ENCODE measurements at regions of chr1 and their contacts with region 1.

Region 1: GRCh38 chr1:33460947-33461629 is 11.4 kb upstream of the ZSCAN20 start:
- DNase-seq: no peak
- H3K4me3 ChIP-seq: no peak overlapping the region
- H3K4me3 Mint-ChIP-seq: no peak overlapping the region
- H3K27ac ChIP-seq: no peak overlapping the region
- H3K27ac Mint-ChIP-seq: peak overlapping the region in 1 of 7 donors; percentile 31
- H3K4me1 ChIP-seq: no peaks in the 10 kb centered on the region
- H3K4me1 Mint-ChIP-seq: no peaks in the 10 kb centered on the region
- H3K27me3 ChIP-seq: no peaks in the 10 kb centered on the region
- H3K27me3 Mint-ChIP-seq: peaks cover 0 to 5% of the 10 kb centered on the region in 2 donors

Region 2: DNA sequence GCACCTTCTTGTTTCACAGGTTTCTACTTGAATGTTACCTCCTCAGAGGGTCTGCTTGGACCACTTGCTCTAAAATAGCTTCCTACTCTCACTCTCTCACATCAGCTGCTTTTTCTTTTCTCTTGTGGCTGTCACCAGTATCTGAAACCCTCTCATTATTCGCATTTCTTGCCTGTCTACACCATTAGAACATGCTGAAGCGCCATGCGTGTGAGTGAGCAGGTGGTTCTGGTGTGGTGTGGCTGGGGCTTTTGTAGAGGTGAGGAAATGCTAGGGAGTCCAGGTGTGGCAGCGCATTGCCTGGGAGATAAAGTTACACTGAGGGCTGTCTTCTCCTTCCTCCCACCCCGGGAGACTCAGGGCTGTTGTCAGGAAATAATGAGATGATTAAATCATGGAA is 200.6 kb before region 1 on chr1:
- CTCF ChIA-PET with region 1: no interaction called
- POLR2A ChIA-PET with region 1: no interaction called
- intact Hi-C with region 1: no loop called
- DNase-seq: no peak
- H3K4me3 ChIP-seq: no peak overlapping the region
- H3K4me3 Mint-ChIP-seq: peak overlapping the region in 2 of 8 donors; percentile 32 to 51
- H3K27ac ChIP-seq: no peak overlapping the region
- H3K27ac Mint-ChIP-seq: peak overlapping the region in 4 of 7 donors; percentile 6 to 53 (median 52)
- H3K4me1 ChIP-seq: peaks cover 35% of the 10 kb centered on the region
- H3K4me1 Mint-ChIP-seq: peaks cover 27 to 54% (median 39%) of the 10 kb centered on the region in 4 donors
- H3K27me3 ChIP-seq: no peaks in the 10 kb centered on the region
- H3K27me3 Mint-ChIP-seq: peaks cover 0 to 2% of the 10 kb centered on the region in 2 donors

Region 3: DNA sequence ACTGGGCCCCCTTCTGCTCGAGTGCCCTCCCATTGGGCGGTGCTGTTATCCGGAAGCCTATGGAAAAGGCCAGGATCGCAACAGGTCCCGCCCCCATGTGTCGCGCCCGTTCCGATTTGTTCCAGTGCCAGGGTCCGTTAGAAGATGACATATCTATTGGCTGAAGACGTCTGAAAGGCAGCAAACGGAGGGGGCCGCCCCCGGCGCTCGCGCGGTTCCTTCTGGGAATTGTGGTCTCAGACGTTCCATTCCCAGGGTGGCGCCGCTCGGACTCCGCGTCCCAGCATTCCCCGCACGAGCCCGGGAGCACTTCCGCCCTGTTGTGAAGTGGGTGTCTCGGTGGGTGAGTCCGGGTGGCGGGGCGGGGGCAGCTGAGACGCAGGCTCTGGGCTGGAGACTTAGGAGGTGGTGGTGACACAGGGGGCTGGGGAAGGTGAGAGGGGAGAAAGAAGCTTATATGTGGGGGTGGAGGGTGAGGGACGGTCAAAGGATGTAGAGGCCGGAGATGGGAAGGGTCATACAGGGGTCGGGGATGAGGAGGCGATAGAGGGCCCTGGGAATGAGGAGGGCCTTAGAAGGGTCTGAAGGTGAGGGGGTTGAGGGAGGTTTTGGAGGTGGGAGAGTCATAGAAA is 11.4 kb after region 1 on chr1 and contains the start of gene ZSCAN20:
- CTCF ChIA-PET with region 1: interaction called, 16 read pairs
- POLR2A ChIA-PET with region 1: no interaction called
- intact Hi-C with region 1: no loop called
- DNase-seq: peak; percentile 76 to 81 (median 77)
- H3K4me3 ChIP-seq: peak within 1 kb of the TSS; percentile 43 to 66
- H3K4me3 Mint-ChIP-seq: peak within 1 kb of the TSS; percentile 87 to 99 (median 93)
- H3K27ac ChIP-seq: peak within 1 kb of the TSS; percentile 53
- H3K27ac Mint-ChIP-seq: peak within 1 kb of the TSS; percentile 72 to 96 (median 89)
- H3K4me1 ChIP-seq: peaks cover 17% of the 10 kb centered on the region
- H3K4me1 Mint-ChIP-seq: peaks cover 19 to 34% (median 27%) of the 10 kb centered on the region in 4 donors
- H3K27me3 ChIP-seq: no peaks in the 10 kb centered on the region
- H3K27me3 Mint-ChIP-seq: no peaks in the 10 kb centered on the region
- total RNA-seq, gene ZSCAN20: 3.8 to 3.9 TPM

Measured in CD4-positive, alpha-beta memory T cell (primary cell).